Activated naive CD8-positive, alpha-beta T cell treated with anti-CD3 and anti-CD28 coated beads, Interleukin-2, amount 10 ng/mL, durations not matched to agents 7 days and 5 days (primary cell): ENCODE measurements at regions of chr17 and their contacts with region 1.

Region 1: DNA sequence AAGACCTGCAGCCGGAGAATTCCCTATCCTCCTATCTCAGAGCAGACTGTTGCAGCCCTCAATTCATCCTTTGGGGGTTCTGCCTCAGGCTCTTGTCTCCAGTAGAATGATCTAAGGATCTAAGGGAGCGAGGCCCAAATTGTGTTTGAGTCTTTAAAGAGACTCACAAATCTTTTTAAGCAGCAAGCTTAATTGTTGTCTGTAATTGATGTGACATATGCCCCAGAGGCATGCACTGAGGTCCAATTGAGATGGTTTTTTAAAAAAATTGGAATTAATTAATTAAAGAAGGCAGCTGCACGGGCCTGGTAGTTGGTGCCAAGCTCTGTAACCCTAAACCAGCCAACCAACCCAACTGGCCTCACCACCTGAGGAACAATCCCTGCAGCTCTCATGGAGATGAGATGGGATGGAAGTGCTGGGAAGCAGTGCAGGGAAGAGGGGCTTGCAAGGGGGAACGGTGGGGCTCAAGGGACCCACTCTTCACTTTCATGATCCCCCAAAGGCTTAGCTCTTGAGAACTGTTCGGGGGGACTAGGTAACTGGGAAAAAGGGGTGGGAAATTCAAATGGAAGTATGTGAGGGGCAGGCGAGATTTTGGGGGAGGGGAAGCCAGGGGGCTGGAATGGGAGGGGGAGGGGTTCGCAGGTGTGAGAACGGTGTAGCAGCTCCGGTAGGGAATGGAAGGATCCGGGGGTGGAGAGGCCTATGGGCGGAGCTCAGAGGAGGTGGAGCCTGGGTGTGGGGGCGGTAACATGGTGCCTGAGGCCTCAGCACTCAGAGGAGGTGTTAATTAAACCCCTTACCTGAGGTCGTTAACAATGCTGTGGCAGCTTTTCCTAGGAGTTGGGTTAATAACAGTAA is 9.2 kb upstream of the ZNF652 start:
- DNase-seq: no peak
- ATAC-seq: no peak
- H3K4me3 Mint-ChIP-seq: no peak overlapping the region
- H3K27ac Mint-ChIP-seq: no peak overlapping the region
- H3K4me1 Mint-ChIP-seq: peaks cover 3% of the 10 kb centered on the region
- H3K27me3 Mint-ChIP-seq: no peaks in the 10 kb centered on the region

Region 2: GRCh38 chr17:49352587-49353154 is 18.5 kb before region 1 on chr17:
- POLR2A ChIA-PET with region 1: no interaction called
- DNase-seq: no peak
- ATAC-seq: no peak
- H3K4me3 Mint-ChIP-seq: no peak overlapping the region
- H3K27ac Mint-ChIP-seq: no peak overlapping the region
- H3K4me1 Mint-ChIP-seq: peaks cover 24% of the 10 kb centered on the region
- H3K27me3 Mint-ChIP-seq: no peaks in the 10 kb centered on the region

Region 3: DNA sequence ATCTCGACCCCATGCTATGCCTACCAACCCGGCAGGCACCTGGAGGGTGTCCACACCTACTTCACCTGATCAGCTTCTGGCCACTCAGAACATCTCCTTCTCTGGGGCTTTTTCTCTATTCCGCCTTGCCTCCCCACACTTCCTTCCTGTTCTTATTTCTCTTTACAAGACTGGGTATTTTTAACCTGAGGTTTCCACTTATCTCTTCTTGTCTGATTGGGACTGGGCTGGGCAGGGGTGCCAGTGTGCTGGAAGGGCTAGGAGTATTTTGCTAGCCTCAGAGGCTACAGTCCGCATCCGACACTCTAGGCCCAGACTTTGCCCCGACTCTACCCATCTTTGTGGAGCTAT is 17.1 kb after region 1 on chr17:
- POLR2A ChIA-PET with region 1: interaction called, 10 read pairs
- DNase-seq: peak; percentile 48
- ATAC-seq: peak; percentile 85
- H3K4me3 Mint-ChIP-seq: peak overlapping the region; percentile 81
- H3K27ac Mint-ChIP-seq: peak overlapping the region; percentile 97
- H3K4me1 Mint-ChIP-seq: peaks cover 41% of the 10 kb centered on the region
- H3K27me3 Mint-ChIP-seq: no peaks in the 10 kb centered on the region